WTC11 (cell line): ENCODE measurements at regions of chr12 and their contacts with region 1.

Region 1: GRCh38 chr12:53757095-53757770 is 5.5 kb upstream of the CISTR start:
- DNase-seq: peak; percentile 97
- ATAC-seq: peak; percentile 68
- H3K4me3 Mint-ChIP-seq: peak overlapping the region; percentile 65
- H3K27ac Mint-ChIP-seq: no peak overlapping the region
- H3K4me1 Mint-ChIP-seq: peaks cover 2% of the 10 kb centered on the region
- H3K27me3 Mint-ChIP-seq: peaks cover 9% of the 10 kb centered on the region; the same call in 1 of the 2 replicates
- CTCF ChIP-seq: peak; percentile 95

Region 2: GRCh38 chr12:53402871-53403270 is 354.4 kb before region 1 on chr12:
- CTCF ChIA-PET with region 1: no interaction called
- POLR2A ChIA-PET with region 1: no interaction called
- DNase-seq: no peak
- ATAC-seq: no peak
- H3K4me3 Mint-ChIP-seq: no peak overlapping the region
- H3K27ac Mint-ChIP-seq: no peak overlapping the region
- H3K4me1 Mint-ChIP-seq: no peaks in the 10 kb centered on the region
- H3K27me3 Mint-ChIP-seq: no peaks in the 10 kb centered on the region
- CTCF ChIP-seq: no peak

Region 3: GRCh38 chr12:53675651-53676453 is 81.4 kb before region 1 on chr12 and contains the start of gene ATP5MC2:
- CTCF ChIA-PET with region 1: interaction called, 22 read pairs
- POLR2A ChIA-PET with region 1: interaction called, 4 read pairs
- DNase-seq: peak; percentile 97
- ATAC-seq: peak; percentile 88
- H3K4me3 Mint-ChIP-seq: peak within 1 kb of the TSS; percentile 95
- H3K27ac Mint-ChIP-seq: peak within 1 kb of the TSS; percentile 98
- H3K4me1 Mint-ChIP-seq: peaks cover 42% of the 10 kb centered on the region
- H3K27me3 Mint-ChIP-seq: no peaks in the 10 kb centered on the region; the same call in 1 of the 2 replicates
- CTCF ChIP-seq: peak; percentile 83
- total RNA-seq, gene ATP5MC2: 411 to 527 TPM (median 517 TPM) in 3 replicates

Region 4: DNA sequence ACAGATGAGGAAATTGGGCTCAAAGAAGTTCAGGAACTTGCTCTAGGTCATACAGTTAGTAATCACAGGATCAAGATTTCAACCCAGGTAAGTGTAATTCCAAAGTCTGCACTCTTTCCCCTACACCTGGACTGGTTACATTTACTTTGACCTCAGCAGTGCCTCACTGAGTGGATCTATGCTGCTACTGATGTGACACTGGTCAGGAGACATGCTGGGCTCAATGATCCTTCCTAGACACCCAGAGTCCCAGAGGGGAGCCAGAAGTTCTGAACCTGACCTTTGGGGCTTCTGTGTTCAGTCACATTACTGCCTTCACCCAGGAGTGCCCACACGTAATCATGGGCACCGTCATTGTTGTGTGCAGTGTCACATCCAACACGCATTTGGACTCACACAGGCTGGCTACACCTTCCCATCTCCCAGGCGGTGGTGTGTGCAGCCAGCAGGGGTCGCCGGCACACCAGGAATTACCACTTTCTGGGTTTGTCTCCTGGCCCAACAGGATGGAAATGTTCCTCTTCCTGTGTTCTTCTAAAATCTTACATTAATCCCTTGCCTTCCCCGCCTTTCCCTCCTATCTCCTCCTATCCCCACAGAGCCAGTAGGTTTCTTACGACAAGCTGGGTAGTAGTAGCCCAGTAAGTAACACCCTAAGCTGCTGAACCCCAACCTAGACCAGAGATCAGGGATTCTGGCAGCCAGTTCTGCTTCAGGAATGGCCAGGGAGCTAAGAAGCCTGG is 55.5 kb before region 1 on chr12:
- CTCF ChIA-PET with region 1: interaction called, 40 read pairs
- POLR2A ChIA-PET with region 1: interaction called, 4 read pairs
- DNase-seq: peak; percentile 90
- ATAC-seq: peak; percentile 94
- H3K4me3 Mint-ChIP-seq: no peak overlapping the region
- H3K27ac Mint-ChIP-seq: no peak overlapping the region
- H3K4me1 Mint-ChIP-seq: peaks cover 21% of the 10 kb centered on the region
- H3K27me3 Mint-ChIP-seq: peaks cover 60% of the 10 kb centered on the region
- CTCF ChIP-seq: peak; percentile 77

Region 5: DNA sequence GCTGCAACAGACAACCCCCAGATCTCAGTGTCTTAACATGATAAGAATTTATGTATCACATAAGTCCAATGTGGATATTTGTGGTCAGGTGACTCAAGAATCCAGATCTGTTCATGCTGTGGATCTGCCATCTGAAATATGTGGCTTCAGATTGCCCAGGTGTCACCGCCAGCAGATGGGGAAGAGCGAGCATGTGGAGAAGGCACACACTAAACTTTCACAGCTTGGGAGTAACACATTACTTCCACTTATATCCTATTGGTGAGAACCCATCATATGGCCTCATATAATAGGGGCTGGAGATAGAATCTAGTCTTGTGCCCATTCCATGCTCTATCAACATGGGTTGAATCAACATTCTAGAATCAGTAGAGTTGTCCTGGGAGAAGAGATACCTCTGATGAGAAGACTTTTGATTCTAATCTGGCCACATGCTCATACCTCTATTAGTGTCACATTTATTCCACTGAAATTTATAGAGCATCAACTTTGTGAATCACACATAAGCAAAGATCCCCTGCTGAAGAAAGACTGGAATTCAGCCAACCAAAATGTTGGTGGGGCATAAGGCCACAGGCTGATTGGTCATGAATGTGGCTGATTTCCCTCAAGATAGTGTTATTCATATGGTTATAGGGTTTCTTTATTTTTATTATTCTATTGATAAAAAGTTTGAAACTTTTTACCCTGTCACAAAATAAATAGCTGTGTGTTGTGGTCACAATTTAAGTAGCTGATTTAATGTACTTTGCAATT is 24.0 kb before region 1 on chr12:
- CTCF ChIA-PET with region 1: interaction called, 22 read pairs
- POLR2A ChIA-PET with region 1: no interaction called
- DNase-seq: no peak
- ATAC-seq: no peak
- H3K4me3 Mint-ChIP-seq: no peak overlapping the region
- H3K27ac Mint-ChIP-seq: no peak overlapping the region
- H3K4me1 Mint-ChIP-seq: peaks cover 18% of the 10 kb centered on the region
- H3K27me3 Mint-ChIP-seq: peaks cover 10% of the 10 kb centered on the region
- CTCF ChIP-seq: no peak

Region 6: DNA sequence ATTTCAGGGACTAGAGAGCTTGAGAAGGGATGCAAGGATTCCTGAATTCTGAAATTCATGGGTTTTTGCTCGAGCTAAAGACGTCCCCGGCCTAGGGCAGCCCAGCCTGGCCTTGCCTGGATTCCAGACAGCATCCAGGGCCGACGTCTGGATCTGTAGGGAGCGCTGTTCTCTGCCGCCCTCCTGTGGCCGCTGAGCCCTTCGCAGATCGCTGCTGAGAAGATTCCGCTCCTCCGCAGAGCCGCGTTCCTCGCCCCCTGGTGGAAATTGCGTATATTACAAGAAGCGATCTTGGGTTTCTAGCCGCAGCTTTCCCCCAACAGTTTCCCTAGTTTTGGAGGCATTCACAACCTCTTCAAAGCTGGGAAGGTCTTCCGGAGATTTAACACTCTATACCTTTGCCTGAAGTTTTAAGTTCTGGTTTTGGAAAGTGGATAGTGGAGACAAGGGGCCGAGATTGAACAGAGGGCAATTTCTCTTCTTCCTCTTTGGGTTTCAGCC is 10.6 kb before region 1 on chr12:
- CTCF ChIA-PET with region 1: interaction called, 224 read pairs
- POLR2A ChIA-PET with region 1: interaction called, 3 read pairs
- DNase-seq: peak; percentile 97
- ATAC-seq: peak; percentile 74
- H3K4me3 Mint-ChIP-seq: no peak overlapping the region
- H3K27ac Mint-ChIP-seq: no peak overlapping the region
- H3K4me1 Mint-ChIP-seq: peaks cover 16% of the 10 kb centered on the region
- H3K27me3 Mint-ChIP-seq: peaks cover 15% of the 10 kb centered on the region
- CTCF ChIP-seq: peak; percentile 98

Region 7: GRCh38 chr12:53806721-53807120 is 49.5 kb after region 1 on chr12:
- CTCF ChIA-PET with region 1: interaction called, 20 read pairs
- POLR2A ChIA-PET with region 1: no interaction called
- DNase-seq: no peak
- ATAC-seq: no peak
- H3K4me3 Mint-ChIP-seq: no peak overlapping the region
- H3K27ac Mint-ChIP-seq: no peak overlapping the region
- H3K4me1 Mint-ChIP-seq: peaks cover 16% of the 10 kb centered on the region
- H3K27me3 Mint-ChIP-seq: peaks cover 13% of the 10 kb centered on the region
- CTCF ChIP-seq: no peak